ENCODE measurements at regions of chr17 and their contacts with region 1.

Region 1: GRCh38 chr17:36601303-36602029 is at the start of gene MRM1:
- DNase-seq: peak; percentile 91
- H3K4me3 Mint-ChIP-seq: peak within 1 kb of the TSS; percentile 83
- H3K27ac Mint-ChIP-seq: peak within 1 kb of the TSS; percentile 80
- H3K4me1 Mint-ChIP-seq: peaks cover 39% of the 10 kb centered on the region
- H3K27me3 Mint-ChIP-seq: no peaks in the 10 kb centered on the region
- total RNA-seq, gene MRM1: 7.3 to 8.4 TPM

Region 2: DNA sequence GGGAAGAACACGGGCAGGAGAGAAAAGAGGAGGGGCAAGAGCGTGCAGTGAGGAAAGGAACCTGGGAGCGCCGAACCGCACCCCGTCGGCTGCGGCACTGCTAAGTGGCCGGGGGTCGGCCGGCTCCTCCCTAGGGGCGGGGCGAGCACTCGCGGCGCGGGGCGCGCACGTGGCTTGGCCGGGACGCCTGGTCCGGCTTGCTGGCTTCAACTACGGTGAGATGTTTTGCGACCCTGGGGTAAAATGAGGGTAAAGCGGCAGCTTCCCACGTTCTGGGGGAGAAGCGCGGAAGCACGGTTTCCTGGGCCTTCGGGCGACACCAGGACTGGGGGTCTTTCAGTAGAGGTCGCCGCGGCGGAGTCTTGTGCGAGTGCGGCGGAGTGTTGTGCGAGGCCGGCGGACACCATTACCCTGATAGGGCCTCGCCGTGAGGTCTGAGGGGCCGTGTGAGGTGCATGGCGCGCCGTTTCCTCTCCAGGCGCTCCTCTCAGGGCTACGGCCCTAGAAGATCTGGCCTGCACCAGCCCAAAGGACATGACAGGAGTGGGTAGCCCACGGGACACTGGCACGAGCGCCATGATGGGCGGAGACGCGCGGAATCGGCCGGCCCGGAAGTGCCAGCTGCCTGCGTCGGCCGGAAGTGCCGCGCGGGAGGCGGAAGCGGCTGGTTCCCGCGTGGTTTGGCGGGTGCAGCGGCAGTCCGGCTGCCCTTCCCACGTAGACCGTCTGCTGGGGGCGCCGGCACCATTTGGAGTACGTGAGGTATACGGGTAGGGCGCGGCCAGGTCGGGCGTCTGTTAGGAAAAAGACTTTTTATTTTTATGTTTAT is 66.4 kb before region 1 on chr17 and contains the starts of genes MYO19 and PIGW:
- CTCF ChIA-PET with region 1: interaction called, 12 read pairs
- POLR2A ChIA-PET with region 1: interaction called, 37 read pairs
- DNase-seq: peak; percentile 89
- H3K4me3 Mint-ChIP-seq: peak within 1 kb of the TSS; percentile 98
- H3K27ac Mint-ChIP-seq: peak within 1 kb of the TSS; percentile 99
- H3K4me1 Mint-ChIP-seq: peaks cover 51% of the 10 kb centered on the region
- H3K27me3 Mint-ChIP-seq: no peaks in the 10 kb centered on the region
- total RNA-seq, gene MYO19: 87.2 to 92.2 TPM
- total RNA-seq, gene PIGW: 6.4 to 6.9 TPM

Region 3: DNA sequence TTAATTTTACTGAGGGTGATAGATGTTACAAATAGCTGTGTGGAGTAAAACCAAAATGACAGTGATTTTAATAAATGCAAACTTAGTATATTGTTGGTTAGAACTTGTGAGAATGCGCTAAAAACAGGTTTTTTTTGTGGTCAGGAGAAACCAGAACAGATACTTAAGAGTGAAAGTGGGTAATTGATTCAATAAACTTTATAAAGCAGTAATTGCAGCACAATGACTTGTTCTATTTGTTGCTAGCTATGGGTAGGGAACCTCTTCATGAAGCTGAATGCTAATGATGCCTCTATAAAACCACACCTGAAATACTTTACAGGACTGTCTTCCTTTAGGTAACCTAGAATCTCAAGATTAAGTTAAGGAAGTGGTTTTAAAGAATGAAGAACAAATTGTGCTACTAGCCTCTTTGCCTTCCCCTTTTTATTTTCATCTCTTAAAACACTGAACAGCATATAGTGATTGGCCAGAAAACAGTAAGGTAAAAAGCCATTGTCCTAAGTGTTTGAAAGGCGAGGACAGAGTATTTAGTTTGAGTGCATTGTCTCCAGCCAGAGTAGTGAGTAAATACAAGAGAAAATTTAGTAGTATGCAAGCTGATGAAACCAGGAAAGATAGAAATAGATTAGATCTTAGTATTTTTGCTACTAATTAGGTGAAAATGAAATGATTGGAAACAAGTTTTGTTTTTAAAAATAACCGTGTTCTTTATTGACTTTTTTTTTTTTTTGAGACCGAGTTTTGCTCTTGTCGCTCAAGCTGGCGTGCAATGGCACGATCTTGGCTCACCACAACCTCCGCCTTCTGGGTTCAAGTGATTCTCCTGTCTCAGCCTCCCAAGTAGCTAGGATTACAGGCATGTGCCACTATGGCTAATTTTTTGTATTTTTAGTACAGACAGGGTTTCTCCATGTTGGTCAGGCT is 50.7 kb before region 1 on chr17:
- CTCF ChIA-PET with region 1: interaction called, 8 read pairs
- POLR2A ChIA-PET with region 1: interaction called, 40 read pairs
- DNase-seq: no peak
- H3K4me3 Mint-ChIP-seq: no peak overlapping the region
- H3K27ac Mint-ChIP-seq: peak overlapping the region; percentile 41
- H3K4me1 Mint-ChIP-seq: peaks cover 61% of the 10 kb centered on the region
- H3K27me3 Mint-ChIP-seq: no peaks in the 10 kb centered on the region

Region 4: GRCh38 chr17:36629252-36629847 is 27.9 kb after region 1 on chr17:
- CTCF ChIA-PET with region 1: interaction called, 26 read pairs
- POLR2A ChIA-PET with region 1: interaction called, 5 read pairs
- DNase-seq: peak; percentile 81
- H3K4me3 Mint-ChIP-seq: no peak overlapping the region
- H3K27ac Mint-ChIP-seq: no peak overlapping the region
- H3K4me1 Mint-ChIP-seq: no peaks in the 10 kb centered on the region
- H3K27me3 Mint-ChIP-seq: peaks cover 12% of the 10 kb centered on the region

Region 5: GRCh38 chr17:37047631-37048104 is 446.2 kb after region 1 on chr17:
- CTCF ChIA-PET with region 1: interaction called, 11 read pairs
- POLR2A ChIA-PET with region 1: no interaction called
- DNase-seq: peak; percentile 84
- H3K4me3 Mint-ChIP-seq: no peak overlapping the region
- H3K27ac Mint-ChIP-seq: no peak overlapping the region
- H3K4me1 Mint-ChIP-seq: peaks cover 9% of the 10 kb centered on the region
- H3K27me3 Mint-ChIP-seq: no peaks in the 10 kb centered on the region

Measured in activated CD4-positive, alpha-beta memory T cell treated with anti-CD3 and anti-CD28 coated beads, Interleukin-2, amount 10 ng/mL, durations not matched to agents 7 days and 5 days (primary cell).